Cardiac septum (tissue), 1 donor: ENCODE measurements at regions of chr1 and their contacts with region 1.

Region 1: DNA sequence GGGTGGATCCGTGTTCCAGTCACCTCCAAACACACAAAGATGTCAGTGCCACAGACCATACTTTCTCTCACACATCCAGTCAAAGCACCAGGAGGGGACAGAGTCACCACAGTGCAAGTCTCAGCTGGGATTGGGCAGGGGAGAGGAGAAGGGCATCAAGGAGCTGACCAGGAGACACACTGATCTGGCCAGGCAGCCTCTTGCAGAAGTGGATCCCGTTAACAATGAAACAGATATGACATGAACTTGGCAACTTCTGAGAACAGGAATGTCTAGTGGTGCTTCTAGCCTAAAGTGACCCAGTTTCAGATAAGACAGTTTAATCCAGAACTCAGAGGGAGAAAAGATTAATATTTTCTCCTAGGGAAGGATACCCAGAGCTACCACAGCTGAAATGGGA is 71.0 kb downstream of the HIVEP3 start:
- DNase-seq: no peak

Region 2: DNA sequence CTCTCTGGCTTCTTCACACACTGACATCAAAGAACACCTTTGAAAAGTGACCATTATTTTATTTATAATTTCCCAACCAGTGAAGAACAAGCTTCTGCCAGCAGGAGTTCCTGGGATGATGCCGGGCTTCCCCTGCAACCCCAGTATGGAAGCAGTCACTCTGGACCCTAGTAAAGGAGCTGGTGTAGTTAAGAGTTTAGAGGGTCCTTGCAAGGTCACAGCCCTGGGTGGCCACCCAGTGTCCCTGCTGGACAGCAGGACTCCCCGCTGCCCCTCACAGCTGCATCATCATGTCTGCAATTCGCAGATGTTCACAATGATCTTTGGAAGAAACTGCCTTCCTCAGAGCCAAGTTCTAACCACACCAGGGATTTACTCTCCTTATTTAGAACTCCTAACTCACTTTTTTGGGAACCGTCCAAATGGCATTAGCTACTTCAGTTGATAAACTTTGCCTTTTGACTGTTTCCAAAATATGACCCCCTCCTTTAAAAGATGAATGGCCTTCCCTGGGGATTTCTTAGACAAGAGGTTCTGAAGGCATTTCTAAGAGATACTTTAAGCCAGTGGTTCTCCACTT is 19.7 kb before region 1 on chr1:
- intact Hi-C with region 1: loop called (anchors 2 kb)
- DNase-seq: no peak

Region 3: GRCh38 chr1:42419126-42419863 is 571.6 kb after region 1 on chr1:
- intact Hi-C with region 1: no loop called
- DNase-seq: peak; percentile 82